ENCODE measurements at regions of chr11 and their contacts with region 1.

Region 1: DNA sequence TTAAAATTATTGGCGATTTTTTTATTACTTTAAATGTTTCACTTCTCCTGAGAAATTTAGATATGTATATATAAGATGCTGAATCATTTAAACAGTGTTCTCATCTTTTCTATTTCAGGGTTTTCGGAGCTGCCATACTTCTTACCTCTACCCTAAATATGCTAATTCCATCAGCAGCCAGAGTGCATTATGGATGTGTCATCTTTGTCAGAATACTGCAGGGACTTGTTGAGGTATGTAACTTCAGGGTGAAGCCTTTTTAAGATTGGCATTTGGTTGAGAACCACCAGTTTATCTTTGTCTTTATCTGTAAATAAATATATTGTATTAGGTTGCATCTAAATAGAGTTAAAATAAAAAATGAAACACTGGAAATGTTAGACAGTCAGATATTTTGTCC is 21.1 kb downstream of the SLC17A6 start:
- DNase-seq: no peak
- ATAC-seq: no peak
- H3K4me3 ChIP-seq: no peak overlapping the region
- H3K27ac ChIP-seq: no peak overlapping the region
- H3K4me1 ChIP-seq: no peaks in the 10 kb centered on the region
- H3K27me3 ChIP-seq: no peaks in the 10 kb centered on the region; a peak in 1 of 4 replicates
- CTCF ChIP-seq: no peak
- EP300 ChIP-seq: no peak
- POLR2A ChIP-seq: no peak
- RAD21 ChIP-seq: no peak

Region 2: GRCh38 chr11:21825127-21825526 is 534.2 kb before region 1 on chr11:
- CTCF ChIA-PET with region 1: no interaction called
- POLR2A ChIA-PET with region 1: no interaction called
- RAD21 ChIA-PET with region 1: no interaction called
- SMC1A ChIA-PET with region 1: no interaction called
- in situ Hi-C with region 1: no loop called
- intact Hi-C with region 1: no loop called
- DNase-seq: no peak
- ATAC-seq: no peak
- H3K4me3 ChIP-seq: no peak overlapping the region
- H3K27ac ChIP-seq: no peak overlapping the region
- H3K4me1 ChIP-seq: no peaks in the 10 kb centered on the region
- H3K27me3 ChIP-seq: no peaks in the 10 kb centered on the region
- CTCF ChIP-seq: no peak
- EP300 ChIP-seq: no peak
- POLR2A ChIP-seq: no peak
- RAD21 ChIP-seq: no peak

Region 3: DNA sequence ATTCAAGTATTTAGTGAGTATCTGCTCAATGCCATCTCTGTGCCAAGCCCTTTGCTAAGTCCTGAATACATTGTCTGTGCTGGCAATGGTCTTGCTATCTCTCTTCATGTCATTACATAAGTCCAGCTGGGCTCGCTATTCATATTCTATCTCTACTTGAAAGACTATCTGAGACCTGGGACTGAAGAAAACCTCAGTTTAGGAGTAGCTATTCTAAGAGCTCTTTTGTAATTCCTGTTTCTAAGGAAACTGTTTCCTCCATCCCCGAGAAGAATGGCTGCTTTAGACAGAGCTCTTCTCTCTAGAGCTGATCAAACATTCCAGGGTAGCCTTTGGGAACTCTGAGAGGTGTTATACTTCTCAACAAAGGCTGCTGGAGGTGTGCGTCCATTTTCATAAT is 11.9 kb after region 1 on chr11:
- CTCF ChIA-PET with region 1: interaction called, 10 read pairs
- POLR2A ChIA-PET with region 1: no interaction called
- RAD21 ChIA-PET with region 1: no interaction called
- SMC1A ChIA-PET with region 1: no interaction called
- in situ Hi-C with region 1: no loop called
- intact Hi-C with region 1: no loop called
- DNase-seq: no peak
- ATAC-seq: no peak
- H3K4me3 ChIP-seq: no peak overlapping the region
- H3K27ac ChIP-seq: no peak overlapping the region
- H3K4me1 ChIP-seq: no peaks in the 10 kb centered on the region
- H3K27me3 ChIP-seq: no peaks in the 10 kb centered on the region
- CTCF ChIP-seq: no peak
- EP300 ChIP-seq: no peak
- POLR2A ChIP-seq: no peak
- RAD21 ChIP-seq: no peak